Activated T-helper 1 cell treated with anti-CD3 and anti-CD28 coated beads, Interleukin-12 subunit alpha, Interleukin-12 subunit beta, Interleukin-2, Interleukin-4 antibody, amounts not matched to agents 30 ng/mL and 10 ng/mL and 1 ng/mL, durations not matched to agents 14 hours and 24 hours and 36 hours (primary cell): ENCODE measurements at regions of chr12 and their contacts with region 1.

Region 1: GRCh38 chr12:6688999-6689882 is at the start of gene ZNF384:
- DNase-seq: peak; percentile 94
- H3K4me3 Mint-ChIP-seq: peak within 1 kb of the TSS; percentile 97
- H3K27ac Mint-ChIP-seq: peak within 1 kb of the TSS; percentile 87
- H3K4me1 Mint-ChIP-seq: peaks cover 58% of the 10 kb centered on the region
- H3K27me3 Mint-ChIP-seq: no peaks in the 10 kb centered on the region
- total RNA-seq, gene ZNF384: 79.6 and 89.8 TPM in 2 replicates

Region 2: GRCh38 chr12:6493497-6494257 is 195.6 kb before region 1 on chr12 and contains the start of gene NCAPD2:
- intact Hi-C with region 1: loop called (anchors 1 kb)
- DNase-seq: peak; percentile 96
- H3K4me3 Mint-ChIP-seq: peak within 1 kb of the TSS; percentile 97
- H3K27ac Mint-ChIP-seq: peak within 1 kb of the TSS; percentile 97
- H3K4me1 Mint-ChIP-seq: peaks cover 33% of the 10 kb centered on the region
- H3K27me3 Mint-ChIP-seq: peaks cover 3% of the 10 kb centered on the region
- total RNA-seq, gene NCAPD2: 91.6 and 93.4 TPM in 2 replicates

Region 3: GRCh38 chr12:6620885-6621274 is 68.4 kb before region 1 on chr12:
- intact Hi-C with region 1: loop called (anchors 1 kb)
- DNase-seq: no peak
- H3K4me3 Mint-ChIP-seq: peak overlapping the region; percentile 51
- H3K27ac Mint-ChIP-seq: peak overlapping the region; percentile 52
- H3K4me1 Mint-ChIP-seq: peaks cover 9% of the 10 kb centered on the region
- H3K27me3 Mint-ChIP-seq: no peaks in the 10 kb centered on the region

Region 4: GRCh38 chr12:6771091-6771495 is 81.9 kb after region 1 on chr12:
- intact Hi-C with region 1: loop called (anchors 5 kb)
- DNase-seq: no peak
- H3K4me3 Mint-ChIP-seq: peak overlapping the region; percentile 82
- H3K27ac Mint-ChIP-seq: peak overlapping the region; percentile 86
- H3K4me1 Mint-ChIP-seq: peaks cover 77% of the 10 kb centered on the region
- H3K27me3 Mint-ChIP-seq: no peaks in the 10 kb centered on the region

Region 5: GRCh38 chr12:6890789-6891645 is 201.8 kb after region 1 on chr12:
- intact Hi-C with region 1: loop called (anchors 1 kb)
- DNase-seq: peak; percentile 98
- H3K4me3 Mint-ChIP-seq: peak overlapping the region; percentile 84
- H3K27ac Mint-ChIP-seq: peak overlapping the region; percentile 95
- H3K4me1 Mint-ChIP-seq: peaks cover 19% of the 10 kb centered on the region
- H3K27me3 Mint-ChIP-seq: no peaks in the 10 kb centered on the region

Region 6: GRCh38 chr12:7018350-7019042 is 329.3 kb after region 1 on chr12 and contains the start of gene LPCAT3:
- intact Hi-C with region 1: loop called (anchors 1 kb)
- DNase-seq: peak; percentile 98
- H3K4me3 Mint-ChIP-seq: peak within 1 kb of the TSS; percentile 93
- H3K27ac Mint-ChIP-seq: peak within 1 kb of the TSS; percentile 95
- H3K4me1 Mint-ChIP-seq: peaks cover 36% of the 10 kb centered on the region
- H3K27me3 Mint-ChIP-seq: no peaks in the 10 kb centered on the region
- total RNA-seq, gene LPCAT3: 27.9 and 30.0 TPM in 2 replicates